Activated CD8-positive, alpha-beta T cell treated with anti-CD3 and anti-CD28 coated beads for 36 hours (primary cell): ENCODE measurements at regions of chr17 and their contacts with region 1.

Region 1: DNA sequence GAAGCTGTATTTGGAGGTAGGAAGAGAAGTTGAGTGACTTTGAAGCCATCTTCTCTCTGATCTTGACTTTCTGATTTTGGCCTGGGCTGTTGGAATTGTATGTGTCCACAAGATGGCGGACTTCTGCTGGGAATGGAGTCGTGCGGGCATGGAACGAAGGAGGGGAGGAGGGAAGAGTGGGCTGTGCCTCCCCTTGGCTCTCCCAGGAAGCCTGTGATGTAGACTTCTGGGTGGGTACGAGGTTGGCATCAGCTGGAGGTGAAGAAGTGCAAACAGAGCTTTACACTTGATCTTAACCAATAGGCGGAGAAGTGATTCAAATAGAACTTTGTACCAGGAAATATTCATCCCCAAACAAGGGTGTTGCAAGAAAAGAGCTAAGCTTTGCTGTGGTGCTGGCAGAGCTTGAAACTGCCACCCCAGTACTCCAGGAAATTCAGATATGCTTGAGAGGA is 7.4 kb upstream of the TMEM220 start:
- DNase-seq: peak; percentile 46
- ATAC-seq: peak; percentile 51
- H3K4me3 Mint-ChIP-seq: no peak overlapping the region
- H3K27ac Mint-ChIP-seq: no peak overlapping the region
- H3K4me1 Mint-ChIP-seq: peaks cover 4% of the 10 kb centered on the region
- H3K27me3 Mint-ChIP-seq: no peaks in the 10 kb centered on the region
- CTCF ChIP-seq: peak; percentile 46

Region 2: GRCh38 chr17:10702574-10702973 is 34.6 kb before region 1 on chr17:
- CTCF ChIA-PET with region 1: interaction called, 12 read pairs
- POLR2A ChIA-PET with region 1: no interaction called
- intact Hi-C with region 1: no loop called
- DNase-seq: no peak
- ATAC-seq: no peak
- H3K4me3 Mint-ChIP-seq: peak overlapping the region; percentile 5
- H3K27ac Mint-ChIP-seq: peak overlapping the region; percentile 66
- H3K4me1 Mint-ChIP-seq: peaks cover 60% of the 10 kb centered on the region
- H3K27me3 Mint-ChIP-seq: no peaks in the 10 kb centered on the region
- CTCF ChIP-seq: no peak

Region 3: DNA sequence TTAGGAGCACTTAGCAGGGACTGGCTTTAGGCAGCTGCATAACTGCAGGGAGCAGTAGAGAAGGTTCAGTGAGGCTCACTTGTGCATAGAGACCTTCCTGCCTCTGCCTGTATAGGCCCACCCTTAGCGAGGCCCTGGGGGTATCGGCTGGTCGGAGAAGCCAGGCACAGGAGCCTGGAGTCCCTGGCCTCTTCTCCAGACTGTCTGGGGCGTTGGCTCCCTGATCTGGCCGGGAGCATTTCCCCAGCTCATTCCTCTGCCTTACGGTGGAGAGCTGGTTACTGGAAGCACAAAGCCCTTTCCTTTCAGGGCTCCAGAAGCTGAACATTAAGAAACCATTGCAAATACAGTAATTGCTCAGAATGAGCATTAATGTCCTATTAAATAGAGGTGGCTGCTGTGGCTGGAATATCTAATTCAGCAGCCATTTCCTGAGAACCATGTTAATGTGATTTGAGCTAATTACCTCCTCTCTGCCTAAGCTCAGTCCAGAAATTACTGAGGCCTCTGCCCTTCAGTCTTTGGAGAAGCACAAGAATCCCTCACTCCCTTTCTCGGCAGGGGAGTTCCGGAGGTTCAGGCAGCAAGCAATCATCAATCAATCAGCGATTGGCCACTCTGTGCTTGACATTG is 11.5 kb after region 1 on chr17:
- CTCF ChIA-PET with region 1: interaction called, 24 read pairs
- POLR2A ChIA-PET with region 1: no interaction called
- intact Hi-C with region 1: no loop called
- DNase-seq: no peak
- ATAC-seq: no peak
- H3K4me3 Mint-ChIP-seq: no peak overlapping the region
- H3K27ac Mint-ChIP-seq: no peak overlapping the region
- H3K4me1 Mint-ChIP-seq: peaks cover 7% of the 10 kb centered on the region
- H3K27me3 Mint-ChIP-seq: no peaks in the 10 kb centered on the region
- CTCF ChIP-seq: no peak

Region 4: DNA sequence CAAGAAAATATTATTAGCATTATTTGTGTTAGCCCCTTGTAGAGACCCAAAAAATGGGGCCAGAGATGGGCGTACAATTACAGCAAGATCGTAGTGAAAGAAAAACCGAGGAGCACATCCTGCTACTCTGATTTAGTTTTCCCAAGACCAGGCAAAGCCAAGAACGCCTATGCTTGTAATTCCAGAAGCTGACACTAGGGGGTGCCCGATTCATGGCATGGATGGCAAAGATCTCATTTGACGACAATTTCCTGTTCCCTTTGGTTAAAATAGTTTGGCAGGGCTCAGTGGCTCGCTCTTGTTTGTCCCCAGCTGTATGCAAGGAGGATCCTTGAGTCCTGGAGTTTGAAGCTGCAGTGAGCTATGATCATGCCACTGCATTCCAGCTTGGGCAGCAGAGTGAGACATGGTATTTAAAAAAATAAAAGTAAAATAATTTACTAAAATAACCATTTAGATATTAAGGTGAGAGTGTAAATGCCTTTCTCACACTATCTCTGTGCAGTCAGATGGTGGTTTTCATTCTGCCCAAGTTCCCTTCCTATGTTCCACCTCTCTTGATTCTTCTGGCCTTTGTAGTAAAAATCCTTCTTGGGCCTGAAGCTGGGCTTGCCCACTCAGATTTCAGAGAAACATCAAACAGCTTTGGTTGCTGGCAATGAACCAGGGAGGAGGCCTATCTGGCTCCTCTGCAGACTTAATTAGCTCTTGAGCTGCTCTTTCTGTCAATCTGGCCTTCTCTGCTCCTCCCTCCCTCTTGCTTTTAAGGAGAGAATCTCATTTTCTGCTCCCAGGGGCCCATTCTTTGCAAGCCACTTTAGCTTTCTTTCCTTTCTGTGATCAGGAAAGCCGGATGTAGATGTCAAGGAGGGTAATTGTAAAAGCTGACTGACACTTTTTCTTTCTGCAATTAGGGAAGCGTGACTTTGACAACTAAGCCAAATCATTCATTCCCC is 35.5 kb after region 1 on chr17:
- CTCF ChIA-PET with region 1: interaction called, 11 read pairs
- POLR2A ChIA-PET with region 1: no interaction called
- intact Hi-C with region 1: no loop called
- DNase-seq: peak; percentile 72
- ATAC-seq: no peak
- H3K4me3 Mint-ChIP-seq: no peak overlapping the region
- H3K27ac Mint-ChIP-seq: no peak overlapping the region
- H3K4me1 Mint-ChIP-seq: no peaks in the 10 kb centered on the region
- H3K27me3 Mint-ChIP-seq: peaks cover 2% of the 10 kb centered on the region
- CTCF ChIP-seq: peak; percentile 88

Region 5: GRCh38 chr17:10844621-10845387 is 107.6 kb after region 1 on chr17:
- CTCF ChIA-PET with region 1: interaction called, 31 read pairs
- POLR2A ChIA-PET with region 1: interaction called, 4 read pairs
- intact Hi-C with region 1: loop called (anchors 5 kb)
- DNase-seq: peak; percentile 77
- ATAC-seq: peak; percentile 99
- H3K4me3 Mint-ChIP-seq: peak overlapping the region; percentile 66
- H3K27ac Mint-ChIP-seq: no peak overlapping the region
- H3K4me1 Mint-ChIP-seq: peaks cover 7% of the 10 kb centered on the region
- H3K27me3 Mint-ChIP-seq: peaks cover under 1% of the 10 kb centered on the region
- CTCF ChIP-seq: peak; percentile 91